K562 (cell line): ENCODE measurements at regions of chr4 and their contacts with region 1.

Region 1: DNA sequence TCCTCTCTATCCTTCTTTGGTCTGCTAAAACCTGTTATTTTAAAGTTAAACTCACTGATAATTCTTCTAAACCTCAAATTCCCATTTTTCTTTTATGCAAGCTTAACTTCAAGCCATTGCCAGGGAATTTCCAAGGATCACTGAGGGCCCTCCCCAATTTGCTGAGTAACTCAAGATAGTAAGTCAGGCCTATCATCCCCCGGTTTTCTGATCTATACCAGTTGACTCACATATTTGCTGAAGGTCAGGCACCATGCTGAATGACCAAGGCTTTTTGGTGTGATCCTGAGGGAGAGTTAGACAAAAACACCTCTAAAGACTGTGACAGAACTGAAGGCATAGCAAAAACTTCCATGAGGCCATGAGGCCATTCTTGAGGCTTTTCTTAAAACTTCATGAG is 1301.9 kb downstream of the PCDH7 start:
- DNase-seq: peak; percentile 35 to 72 (median 52)
- ATAC-seq: peak; percentile 87
- H3K4me3 ChIP-seq: no peak overlapping the region
- H3K27ac ChIP-seq: peak overlapping the region; percentile 77
- H3K4me1 ChIP-seq: peaks cover 0 to 14% of the 10 kb centered on the region in 2 experiments; a peak in 2 of 5 replicates
- H3K27me3 ChIP-seq: no peaks in the 10 kb centered on the region
- CTCF ChIP-seq: no peak
- EP300 ChIP-seq: no peak
- POLR2A ChIP-seq: no peak
- RAD21 ChIP-seq: no peak

Region 2: GRCh38 chr4:32010221-32010620 is 11.8 kb before region 1 on chr4:
- CTCF ChIA-PET with region 1: no interaction called
- POLR2A ChIA-PET with region 1: interaction called, 11 read pairs
- in situ Hi-C with region 1: no loop called
- intact Hi-C with region 1: no loop called
- DNase-seq: peak in 1 of 4 experiments; percentile 30
- ATAC-seq: peak; percentile 44
- H3K4me3 ChIP-seq: no peak overlapping the region
- H3K27ac ChIP-seq: no peak overlapping the region
- H3K4me1 ChIP-seq: no peaks in the 10 kb centered on the region
- H3K27me3 ChIP-seq: no peaks in the 10 kb centered on the region
- CTCF ChIP-seq: no peak
- EP300 ChIP-seq: no peak
- POLR2A ChIP-seq: no peak
- RAD21 ChIP-seq: no peak

Region 3: GRCh38 chr4:32503241-32503640 is 481.2 kb after region 1 on chr4:
- CTCF ChIA-PET with region 1: no interaction called
- POLR2A ChIA-PET with region 1: no interaction called
- in situ Hi-C with region 1: no loop called
- intact Hi-C with region 1: no loop called
- DNase-seq: no peak
- ATAC-seq: no peak
- H3K4me3 ChIP-seq: no peak overlapping the region
- H3K27ac ChIP-seq: no peak overlapping the region
- H3K4me1 ChIP-seq: no peaks in the 10 kb centered on the region
- H3K27me3 ChIP-seq: no peaks in the 10 kb centered on the region
- CTCF ChIP-seq: no peak
- EP300 ChIP-seq: no peak
- POLR2A ChIP-seq: no peak
- RAD21 ChIP-seq: no peak